A549 (cell line): ENCODE measurements at regions of chr5 and their contacts with region 1.

Region 1: GRCh38 chr5:147935032-147935431 is 28.7 kb upstream of the C5orf46 start:
- DNase-seq: peak; percentile 10 to 52
- ATAC-seq: peak; percentile 68 to 80; a peak in 5 of 6 replicates
- H3K4me3 ChIP-seq: no peak overlapping the region
- H3K27ac ChIP-seq: no peak overlapping the region
- H3K4me1 ChIP-seq: no peaks in the 10 kb centered on the region
- CTCF ChIP-seq: peak; percentile 52
- EP300 ChIP-seq: no peak
- POLR2A ChIP-seq: no peak
- RAD21 ChIP-seq: peak; percentile 70 to 73

Region 2: DNA sequence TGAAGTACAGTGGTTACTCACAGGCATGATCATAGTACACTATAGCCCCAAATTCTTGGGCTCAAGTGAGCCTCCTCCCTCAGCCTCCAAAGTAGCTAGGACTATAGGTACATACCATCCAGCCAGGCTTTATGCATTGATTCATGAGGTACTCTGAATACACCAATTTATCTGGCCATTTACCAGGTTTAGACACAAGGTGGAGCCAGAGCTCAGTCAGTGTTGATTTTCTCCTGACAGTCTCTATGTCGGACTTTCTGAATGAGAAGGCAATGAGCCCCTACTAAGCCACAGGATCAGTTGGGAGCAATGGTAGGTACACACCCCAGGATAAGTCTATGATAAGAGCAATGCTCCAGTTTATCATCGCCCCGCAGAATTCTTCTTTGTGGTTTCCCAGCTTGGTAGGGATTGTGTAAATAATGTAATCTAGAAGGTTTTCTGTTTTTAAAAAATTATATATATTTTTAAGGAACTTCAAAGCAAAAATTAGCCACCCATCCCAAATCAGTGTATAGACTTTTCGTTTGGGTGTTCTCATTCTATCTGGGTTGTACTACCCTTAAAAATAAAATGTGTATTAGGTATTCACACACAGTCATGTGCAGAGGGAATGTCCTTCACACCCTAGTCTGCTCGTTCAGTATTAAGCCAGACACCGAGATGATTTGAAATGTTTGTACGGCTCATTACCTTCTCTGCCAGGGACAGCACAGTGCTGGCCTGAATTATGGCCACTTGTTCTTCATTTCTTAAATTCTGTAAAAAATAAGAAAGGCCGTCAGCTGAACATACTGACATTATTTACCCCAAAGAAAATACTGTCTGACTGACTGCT is 306.8 kb before region 1 on chr5:
- CTCF ChIA-PET with region 1: interaction called, 12 read pairs
- POLR2A ChIA-PET with region 1: no interaction called
- DNase-seq: peak; percentile 40 to 61
- ATAC-seq: peak; percentile 88 to 95
- H3K4me3 ChIP-seq: no peak overlapping the region
- H3K27ac ChIP-seq: no peak overlapping the region
- H3K4me1 ChIP-seq: no peaks in the 10 kb centered on the region
- CTCF ChIP-seq: peak; percentile 70
- EP300 ChIP-seq: no peak
- POLR2A ChIP-seq: no peak
- RAD21 ChIP-seq: peak; percentile 74 to 86

Region 3: GRCh38 chr5:147857302-147858129 is 77.5 kb before region 1 on chr5:
- CTCF ChIA-PET with region 1: interaction called, 26 read pairs
- POLR2A ChIA-PET with region 1: no interaction called
- DNase-seq: peak; percentile 25 to 48
- ATAC-seq: peak; percentile 76 to 77
- H3K4me3 ChIP-seq: no peak overlapping the region
- H3K27ac ChIP-seq: no peak overlapping the region
- H3K4me1 ChIP-seq: no peaks in the 10 kb centered on the region
- CTCF ChIP-seq: peak; percentile 70
- EP300 ChIP-seq: no peak
- POLR2A ChIP-seq: no peak
- RAD21 ChIP-seq: peak; percentile 68 to 73

Region 4: DNA sequence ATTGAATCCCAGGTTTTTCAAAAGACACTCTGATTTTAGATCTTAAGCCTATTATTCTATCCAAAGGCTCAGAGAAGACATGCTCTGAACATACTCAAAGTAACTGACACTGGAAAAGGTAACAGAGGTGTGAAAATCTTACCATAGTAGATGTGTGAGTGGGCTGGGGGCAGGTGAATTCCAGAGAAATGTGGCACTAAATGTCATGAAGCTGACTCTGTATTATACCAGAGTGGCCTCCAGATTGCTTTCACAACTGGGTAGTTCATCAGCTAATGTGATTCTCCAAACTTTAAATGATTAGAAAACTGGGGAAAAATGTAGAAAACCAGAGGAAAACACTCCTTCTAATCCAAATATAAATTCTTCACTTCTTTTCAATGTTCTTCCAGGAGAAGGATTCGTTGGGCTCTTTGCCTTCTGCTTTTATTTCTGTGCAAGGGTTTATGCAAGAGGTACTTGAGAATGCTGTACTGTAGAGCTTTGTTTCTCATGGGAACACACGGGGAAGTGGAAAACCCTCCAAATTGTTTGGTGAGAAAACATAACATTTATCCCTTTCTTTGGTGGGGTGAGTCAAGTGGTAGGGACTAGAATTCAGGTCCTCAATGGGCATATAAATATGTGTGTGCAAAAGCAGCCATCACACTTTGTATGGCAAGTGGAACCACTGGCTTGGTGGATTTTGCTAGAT is 56.8 kb before region 1 on chr5 and contains the start of gene SCGB3A2:
- CTCF ChIA-PET with region 1: interaction called, 16 read pairs
- POLR2A ChIA-PET with region 1: no interaction called
- DNase-seq: no peak
- ATAC-seq: no peak
- H3K4me3 ChIP-seq: no peak within 1 kb of the TSS
- H3K27ac ChIP-seq: no peak within 1 kb of the TSS
- H3K4me1 ChIP-seq: no peaks in the 10 kb centered on the region
- CTCF ChIP-seq: no peak
- EP300 ChIP-seq: no peak
- POLR2A ChIP-seq: no peak
- RAD21 ChIP-seq: no peak
- polyA plus RNA-seq, gene SCGB3A2: not detected in 2 replicates

Region 5: GRCh38 chr5:147887024-147887627 is 47.9 kb before region 1 on chr5:
- CTCF ChIA-PET with region 1: interaction called, 35 read pairs
- POLR2A ChIA-PET with region 1: no interaction called
- DNase-seq: peak; percentile 5 to 32
- ATAC-seq: peak in 1 of 2 experiments; percentile 66; a peak in 3 of 6 replicates
- H3K4me3 ChIP-seq: no peak overlapping the region
- H3K27ac ChIP-seq: no peak overlapping the region
- H3K4me1 ChIP-seq: no peaks in the 10 kb centered on the region
- CTCF ChIP-seq: peak; percentile 54
- EP300 ChIP-seq: no peak
- POLR2A ChIP-seq: no peak
- RAD21 ChIP-seq: peak; percentile 43 to 52; a peak in 4 of 5 replicates